Activated naive CD4-positive, alpha-beta T cell treated with anti-CD3 and anti-CD28 coated beads for 36 hours (primary cell): ENCODE measurements at regions of chr1 and their contacts with region 1.

Region 1: GRCh38 chr1:212994926-212995325 is 20.7 kb downstream of the ANGEL2 start:
- DNase-seq: no peak
- H3K4me3 Mint-ChIP-seq: no peak overlapping the region
- H3K27ac Mint-ChIP-seq: no peak overlapping the region
- H3K4me1 Mint-ChIP-seq: peaks cover 4% of the 10 kb centered on the region
- H3K27me3 Mint-ChIP-seq: no peaks in the 10 kb centered on the region

Region 2: GRCh38 chr1:212782422-212783154 is 212.3 kb before region 1 on chr1:
- CTCF ChIA-PET with region 1: interaction called, 4 read pairs
- intact Hi-C with region 1: loop called (anchors 2 kb)
- DNase-seq: peak; percentile 13
- H3K4me3 Mint-ChIP-seq: no peak overlapping the region
- H3K27ac Mint-ChIP-seq: no peak overlapping the region
- H3K4me1 Mint-ChIP-seq: peaks cover 13% of the 10 kb centered on the region
- H3K27me3 Mint-ChIP-seq: no peaks in the 10 kb centered on the region

Region 3: GRCh38 chr1:212814537-212815334 is 180.2 kb before region 1 on chr1:
- CTCF ChIA-PET with region 1: interaction called, 17 read pairs
- intact Hi-C with region 1: loop called (anchors 1 kb)
- DNase-seq: peak; percentile 30
- H3K4me3 Mint-ChIP-seq: no peak overlapping the region
- H3K27ac Mint-ChIP-seq: no peak overlapping the region
- H3K4me1 Mint-ChIP-seq: peaks cover 3% of the 10 kb centered on the region
- H3K27me3 Mint-ChIP-seq: no peaks in the 10 kb centered on the region